HepG2 (cell line): ENCODE measurements at regions of chr1 and their contacts with region 1.

Region 1: GRCh38 chr1:115706587-115707425 is 61.7 kb downstream of the CASQ2 start:
- DNase-seq: peak; percentile 42
- ATAC-seq: peak; percentile 64
- H3K4me3 ChIP-seq: no peak overlapping the region
- H3K27ac ChIP-seq: no peak overlapping the region
- H3K4me1 ChIP-seq: peaks cover 27% of the 10 kb centered on the region
- H3K27me3 ChIP-seq: no peaks in the 10 kb centered on the region
- CTCF ChIP-seq: peak; percentile 68
- EP300 ChIP-seq: no peak
- POLR2A ChIP-seq: no peak
- RAD21 ChIP-seq: no peak

Region 2: DNA sequence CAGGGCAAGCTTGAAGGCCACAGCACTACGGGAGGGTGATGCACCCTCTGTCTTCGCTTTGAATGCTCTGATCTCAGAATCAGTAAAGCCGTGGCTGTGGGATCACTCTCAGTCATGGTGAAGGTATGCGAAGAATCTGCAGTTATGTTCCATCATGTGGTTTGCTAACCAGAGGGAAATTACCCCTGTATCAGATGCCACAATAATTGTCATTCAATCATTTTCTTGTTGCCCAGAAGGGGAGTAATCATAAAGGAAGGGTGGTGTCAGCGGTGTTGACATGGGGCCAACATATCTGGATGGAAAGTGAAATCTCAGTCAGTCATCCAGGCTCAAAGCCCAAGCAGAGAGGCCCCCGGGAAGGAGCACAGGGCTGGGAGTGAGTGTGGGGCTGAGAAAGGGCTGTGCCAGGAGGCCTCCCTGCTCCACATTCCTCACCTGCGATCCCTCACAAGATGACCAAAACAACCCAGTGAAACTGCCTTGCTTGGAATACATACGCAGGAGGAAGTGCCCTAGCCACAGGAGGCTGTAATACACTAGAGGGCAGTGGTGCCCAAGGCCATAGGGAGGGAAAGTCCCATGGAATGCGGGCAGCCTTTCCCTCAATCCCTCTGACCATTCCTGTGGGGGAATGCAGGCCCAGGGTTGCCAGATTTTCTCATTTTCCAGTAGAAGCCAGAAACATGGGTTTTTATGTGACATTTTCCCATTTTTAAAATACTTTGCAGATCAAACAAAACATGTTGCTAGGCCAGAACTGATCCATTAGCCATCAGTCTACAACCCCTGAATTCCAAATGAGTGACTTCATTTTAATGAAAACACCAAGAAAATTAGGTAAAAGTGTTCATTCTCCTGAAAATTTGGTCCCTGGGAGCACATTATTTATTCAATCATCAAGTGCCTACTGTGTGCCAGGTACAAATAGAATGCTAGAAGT is 160.7 kb before region 1 on chr1:
- CTCF ChIA-PET with region 1: no interaction called
- POLR2A ChIA-PET with region 1: no interaction called
- in situ Hi-C with region 1: no loop called
- intact Hi-C with region 1: loop called (anchors 2 kb)
- DNase-seq: peak; percentile 60
- ATAC-seq: peak; percentile 98
- H3K4me3 ChIP-seq: no peak overlapping the region
- H3K27ac ChIP-seq: no peak overlapping the region
- H3K4me1 ChIP-seq: peaks cover 13% of the 10 kb centered on the region
- H3K27me3 ChIP-seq: no peaks in the 10 kb centered on the region
- CTCF ChIP-seq: peak; percentile 87
- EP300 ChIP-seq: no peak
- POLR2A ChIP-seq: no peak
- RAD21 ChIP-seq: no peak; the same call in 1 of the 2 replicates

Region 3: GRCh38 chr1:115624859-115625258 is 81.9 kb before region 1 on chr1:
- CTCF ChIA-PET with region 1: no interaction called
- POLR2A ChIA-PET with region 1: no interaction called
- in situ Hi-C with region 1: no loop called
- intact Hi-C with region 1: no loop called
- DNase-seq: no peak
- ATAC-seq: peak; percentile 74
- H3K4me3 ChIP-seq: no peak overlapping the region
- H3K27ac ChIP-seq: no peak overlapping the region
- H3K4me1 ChIP-seq: peaks cover 4% of the 10 kb centered on the region
- H3K27me3 ChIP-seq: no peaks in the 10 kb centered on the region
- CTCF ChIP-seq: peak; percentile 21; the same call in 1 of the 2 replicates
- EP300 ChIP-seq: no peak
- POLR2A ChIP-seq: no peak
- RAD21 ChIP-seq: no peak

Region 4: GRCh38 chr1:115642168-115643072 is 64.4 kb before region 1 on chr1:
- CTCF ChIA-PET with region 1: no interaction called
- POLR2A ChIA-PET with region 1: interaction called, 3 read pairs
- in situ Hi-C with region 1: no loop called
- intact Hi-C with region 1: loop called (anchors 1 kb)
- DNase-seq: peak; percentile 35
- ATAC-seq: peak; percentile 84
- H3K4me3 ChIP-seq: peak overlapping the region; percentile 75 to 92 (median 84)
- H3K27ac ChIP-seq: peak overlapping the region; percentile 89
- H3K4me1 ChIP-seq: peaks cover 38% of the 10 kb centered on the region
- H3K27me3 ChIP-seq: peaks cover 0 to 2% of the 10 kb centered on the region in 2 experiments; a peak in 1 of 5 replicates
- CTCF ChIP-seq: no peak; the same call in 1 of the 2 replicates
- EP300 ChIP-seq: no peak
- POLR2A ChIP-seq: peak; percentile 41 to 52; a peak in 3 of 4 replicates
- RAD21 ChIP-seq: 0 out of 2 replicates have a peak, but pooled peaks have one; percentile 11

Region 5: GRCh38 chr1:115654663-115655305 is 52.0 kb before region 1 on chr1:
- CTCF ChIA-PET with region 1: no interaction called
- POLR2A ChIA-PET with region 1: no interaction called
- in situ Hi-C with region 1: no loop called
- intact Hi-C with region 1: no loop called
- DNase-seq: no peak
- ATAC-seq: no peak
- H3K4me3 ChIP-seq: no peak overlapping the region
- H3K27ac ChIP-seq: no peak overlapping the region
- H3K4me1 ChIP-seq: peaks cover 3% of the 10 kb centered on the region; the same call in 1 of the 2 replicates
- H3K27me3 ChIP-seq: no peaks in the 10 kb centered on the region
- CTCF ChIP-seq: no peak
- EP300 ChIP-seq: no peak
- POLR2A ChIP-seq: no peak
- RAD21 ChIP-seq: no peak

Region 6: DNA sequence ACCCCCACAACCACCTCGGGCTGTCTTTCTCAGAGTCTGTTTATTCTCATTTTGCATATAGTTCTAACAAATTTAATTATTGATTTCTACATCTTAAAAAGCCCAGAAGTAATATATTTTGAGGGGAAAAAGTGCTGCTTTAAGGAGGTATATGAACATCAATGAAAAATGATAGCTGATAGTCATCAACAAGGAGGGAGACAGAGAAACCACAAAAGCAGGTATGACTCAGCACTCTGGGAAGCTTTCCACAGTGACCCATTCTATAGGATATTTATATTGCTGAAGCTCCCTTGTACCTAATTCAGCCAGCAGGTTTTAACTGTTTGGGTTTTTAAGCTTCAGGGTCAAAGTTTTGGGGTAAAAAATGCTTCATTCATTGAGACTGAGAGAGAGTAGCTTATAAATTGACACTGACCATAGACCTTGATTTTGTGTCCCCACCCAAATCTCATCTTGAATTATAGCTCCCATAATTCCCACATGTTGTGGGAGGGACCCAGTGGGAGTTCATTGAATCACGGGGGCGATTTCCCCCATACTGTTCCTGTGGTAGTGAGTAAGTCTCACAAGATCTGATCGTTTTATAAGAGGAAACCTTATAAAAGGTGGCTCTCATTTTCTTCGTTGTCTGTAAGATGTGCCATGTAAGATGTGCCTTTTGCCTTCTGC is 37.7 kb before region 1 on chr1:
- CTCF ChIA-PET with region 1: no interaction called
- POLR2A ChIA-PET with region 1: no interaction called
- in situ Hi-C with region 1: no loop called
- intact Hi-C with region 1: no loop called
- DNase-seq: peak; percentile 23
- ATAC-seq: no peak
- H3K4me3 ChIP-seq: no peak overlapping the region
- H3K27ac ChIP-seq: no peak overlapping the region
- H3K4me1 ChIP-seq: peaks cover 19% of the 10 kb centered on the region; the same call in 1 of the 2 replicates
- H3K27me3 ChIP-seq: no peaks in the 10 kb centered on the region
- CTCF ChIP-seq: no peak
- EP300 ChIP-seq: no peak
- POLR2A ChIP-seq: no peak
- RAD21 ChIP-seq: no peak